ENCODE measurements at regions of chr12 and their contacts with region 1.

Region 1: DNA sequence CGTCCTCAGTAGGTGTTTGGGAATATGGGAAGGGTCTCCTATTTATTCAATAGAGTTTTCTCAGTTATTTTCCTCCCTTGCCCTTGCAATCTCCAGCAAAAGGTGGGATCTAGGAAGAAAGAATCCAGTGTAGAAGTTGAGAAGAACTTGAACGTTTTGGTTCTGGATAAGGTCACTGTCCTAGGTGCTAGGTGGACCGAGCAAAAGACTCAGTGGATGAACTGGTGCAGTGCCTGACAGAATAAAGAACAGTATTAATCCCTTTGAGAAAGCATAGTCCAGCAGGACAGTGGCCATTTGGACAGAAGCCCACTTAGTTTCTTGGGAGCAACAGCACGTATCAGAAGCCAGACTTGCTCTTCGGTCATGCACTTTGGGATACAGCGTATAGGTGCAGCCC is 32.7 kb upstream of the LRTM2 start:
- DNase-seq: no peak
- ATAC-seq: no peak
- H3K4me3 ChIP-seq: no peak overlapping the region
- H3K27ac ChIP-seq: no peak overlapping the region
- H3K4me1 ChIP-seq: no peaks in the 10 kb centered on the region
- H3K27me3 ChIP-seq: no peaks in the 10 kb centered on the region
- CTCF ChIP-seq: no peak
- POLR2A ChIP-seq: no peak
- RAD21 ChIP-seq: no peak

Region 2: DNA sequence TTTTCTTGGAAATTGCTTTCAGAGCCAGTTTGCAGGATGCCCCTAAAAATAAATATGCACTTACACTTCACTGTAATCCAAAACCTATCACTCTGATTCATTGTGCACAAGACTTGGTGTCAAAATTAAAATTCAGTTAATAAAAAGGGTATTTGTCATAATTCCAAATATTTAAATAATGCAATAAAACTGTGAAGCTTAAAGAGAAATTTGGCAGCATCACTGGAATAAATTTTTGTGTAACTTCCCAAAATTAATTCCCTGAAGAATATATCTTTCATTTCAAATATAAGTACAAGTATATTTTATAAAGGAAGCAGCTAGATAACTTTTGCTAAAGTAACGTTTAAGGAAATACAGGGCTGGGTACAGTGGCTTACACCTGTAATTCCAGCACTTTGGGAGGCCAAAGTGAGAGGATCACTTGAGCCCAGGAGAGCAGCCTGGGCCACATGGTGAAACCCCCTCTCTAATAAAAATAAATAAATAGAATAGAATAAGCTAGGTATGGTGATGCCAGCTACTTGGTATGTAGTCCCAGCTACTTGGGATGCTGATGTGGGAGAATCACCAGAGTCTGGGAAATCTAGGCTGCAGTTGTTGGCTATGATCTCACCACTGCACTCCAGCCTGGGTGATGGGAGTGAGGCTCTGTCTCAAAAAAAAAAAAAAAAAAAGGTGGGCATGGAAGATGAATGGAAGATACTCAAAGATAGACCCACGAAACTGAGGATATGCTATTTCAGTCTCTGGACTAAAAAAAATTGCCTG is 427.1 kb before region 1 on chr12:
- CTCF ChIA-PET with region 1: no interaction called
- POLR2A ChIA-PET with region 1: no interaction called
- dilution Hi-C with region 1: no loop called
- in situ Hi-C with region 1: no loop called
- intact Hi-C with region 1: no loop called
- DNase-seq: peak; percentile 91
- ATAC-seq: peak; percentile 96
- H3K4me3 ChIP-seq: no peak overlapping the region
- H3K27ac ChIP-seq: no peak overlapping the region
- H3K4me1 ChIP-seq: peaks cover 6% of the 10 kb centered on the region
- H3K27me3 ChIP-seq: no peaks in the 10 kb centered on the region
- CTCF ChIP-seq: no peak
- POLR2A ChIP-seq: no peak
- RAD21 ChIP-seq: no peak

Region 3: GRCh38 chr12:1644534-1645438 is 142.9 kb before region 1 on chr12:
- CTCF ChIA-PET with region 1: interaction called, 6 read pairs
- POLR2A ChIA-PET with region 1: no interaction called
- dilution Hi-C with region 1: no loop called
- in situ Hi-C with region 1: loop called (anchors 5 kb)
- intact Hi-C with region 1: no loop called
- DNase-seq: peak; percentile 91
- ATAC-seq: peak; percentile 82
- H3K4me3 ChIP-seq: no peak overlapping the region
- H3K27ac ChIP-seq: no peak overlapping the region
- H3K4me1 ChIP-seq: peaks cover 10% of the 10 kb centered on the region
- H3K27me3 ChIP-seq: no peaks in the 10 kb centered on the region
- CTCF ChIP-seq: no peak
- POLR2A ChIP-seq: no peak
- RAD21 ChIP-seq: no peak

Region 4: GRCh38 chr12:2414810-2415567 is 627.3 kb after region 1 on chr12:
- CTCF ChIA-PET with region 1: no interaction called
- POLR2A ChIA-PET with region 1: no interaction called
- dilution Hi-C with region 1: no loop called
- in situ Hi-C with region 1: no loop called
- intact Hi-C with region 1: no loop called
- DNase-seq: no peak
- ATAC-seq: no peak
- H3K4me3 ChIP-seq: no peak overlapping the region
- H3K27ac ChIP-seq: no peak overlapping the region
- H3K4me1 ChIP-seq: no peaks in the 10 kb centered on the region
- H3K27me3 ChIP-seq: no peaks in the 10 kb centered on the region
- CTCF ChIP-seq: no peak
- POLR2A ChIP-seq: no peak
- RAD21 ChIP-seq: no peak

Region 5: DNA sequence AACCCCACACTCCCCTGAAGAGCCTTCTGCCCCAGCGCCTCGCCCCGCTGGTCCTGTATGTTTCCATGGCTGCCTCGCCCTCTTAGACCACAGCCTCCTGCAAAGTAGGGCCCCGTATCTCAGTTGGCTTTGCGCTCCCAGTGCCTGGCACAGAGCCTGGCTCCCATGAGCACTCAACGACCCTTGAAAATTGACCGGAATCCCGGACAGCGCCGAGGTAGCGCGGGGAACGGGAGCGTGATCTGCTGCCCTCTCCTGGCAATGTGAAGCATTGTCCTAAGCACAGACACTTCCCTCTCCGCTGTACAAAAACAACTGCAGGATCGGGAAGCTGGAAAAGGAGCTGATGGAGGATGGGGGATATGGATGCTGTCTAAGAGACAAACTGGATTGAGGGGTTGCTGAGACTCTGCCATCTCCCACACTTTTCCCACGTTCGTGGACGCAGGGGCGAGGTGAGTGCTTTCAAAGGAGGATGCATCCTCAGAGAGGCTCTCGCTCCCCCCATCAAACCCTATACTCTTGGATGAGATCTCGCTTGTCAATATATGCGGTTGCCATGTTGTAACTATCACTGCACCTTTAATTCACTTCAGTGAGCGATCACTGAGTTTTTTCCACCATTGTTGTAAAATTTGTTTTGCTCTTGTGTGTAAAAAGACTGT is 996.4 kb after region 1 on chr12:
- CTCF ChIA-PET with region 1: no interaction called
- POLR2A ChIA-PET with region 1: no interaction called
- dilution Hi-C with region 1: no loop called
- in situ Hi-C with region 1: no loop called
- intact Hi-C with region 1: no loop called
- DNase-seq: peak; percentile 44
- ATAC-seq: peak; percentile 99
- H3K4me3 ChIP-seq: no peak overlapping the region
- H3K27ac ChIP-seq: no peak overlapping the region
- H3K4me1 ChIP-seq: no peaks in the 10 kb centered on the region
- H3K27me3 ChIP-seq: peaks cover 44% of the 10 kb centered on the region
- CTCF ChIP-seq: peak; percentile 81
- POLR2A ChIP-seq: no peak
- RAD21 ChIP-seq: peak; percentile 71